WTC11 (cell line): ENCODE measurements at regions of chr22 and their contacts with region 1.

Region 1: DNA sequence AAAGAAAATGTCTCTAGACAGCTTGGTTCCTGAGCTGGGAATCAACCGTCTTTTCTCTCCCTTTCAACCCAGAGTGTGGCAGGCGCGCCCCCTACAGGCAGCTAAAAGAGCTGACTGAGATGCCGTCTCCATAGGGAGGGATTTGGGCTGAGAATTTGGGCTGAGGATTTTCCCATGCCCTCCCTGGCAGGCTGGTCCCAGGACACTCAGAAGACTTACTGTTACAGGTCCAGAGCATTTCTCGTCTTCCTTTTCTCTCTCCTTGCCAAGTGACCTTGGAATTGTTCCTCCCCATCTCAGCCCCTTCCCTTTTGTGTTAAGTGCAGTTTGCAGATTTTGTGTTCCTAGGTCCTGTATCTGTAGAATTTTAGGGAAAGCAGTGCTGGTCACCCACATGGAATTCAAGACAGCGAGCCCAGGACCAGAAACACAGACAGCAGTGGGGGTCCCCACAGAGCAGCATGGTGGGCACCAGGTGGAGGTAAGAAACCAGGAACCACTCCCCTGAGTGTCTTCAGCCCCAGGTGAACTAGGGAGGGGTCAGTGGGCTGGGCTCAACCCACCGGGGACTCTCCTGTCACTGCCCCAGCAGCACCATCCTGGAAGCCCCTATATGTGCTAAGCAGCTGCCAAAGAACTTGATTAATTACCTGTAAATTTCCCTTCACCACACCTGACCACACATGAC is 9.9 kb upstream of the IGLL5 start:
- DNase-seq: peak; percentile 85
- ATAC-seq: peak; percentile 83
- H3K4me3 Mint-ChIP-seq: no peak overlapping the region
- H3K27ac Mint-ChIP-seq: no peak overlapping the region
- H3K4me1 Mint-ChIP-seq: no peaks in the 10 kb centered on the region
- H3K27me3 Mint-ChIP-seq: peaks cover 79% of the 10 kb centered on the region
- CTCF ChIP-seq: peak; percentile 78

Region 2: GRCh38 chr22:22802339-22802970 is 75.2 kb before region 1 on chr22:
- CTCF ChIA-PET with region 1: interaction called, 17 read pairs
- POLR2A ChIA-PET with region 1: no interaction called
- DNase-seq: no peak
- ATAC-seq: peak; percentile 62
- H3K4me3 Mint-ChIP-seq: no peak overlapping the region
- H3K27ac Mint-ChIP-seq: no peak overlapping the region
- H3K4me1 Mint-ChIP-seq: peaks cover 5% of the 10 kb centered on the region; the same call in 1 of the 2 replicates
- H3K27me3 Mint-ChIP-seq: peaks cover 94% of the 10 kb centered on the region
- CTCF ChIP-seq: no peak

Region 3: GRCh38 chr22:22810018-22810427 is 67.6 kb before region 1 on chr22:
- CTCF ChIA-PET with region 1: interaction called, 13 read pairs
- POLR2A ChIA-PET with region 1: no interaction called
- DNase-seq: peak; percentile 68
- ATAC-seq: peak; percentile 91
- H3K4me3 Mint-ChIP-seq: no peak overlapping the region
- H3K27ac Mint-ChIP-seq: no peak overlapping the region
- H3K4me1 Mint-ChIP-seq: no peaks in the 10 kb centered on the region
- H3K27me3 Mint-ChIP-seq: peaks cover 84% of the 10 kb centered on the region
- CTCF ChIP-seq: peak; percentile 66; the same call in 1 of the 2 replicates

Region 4: GRCh38 chr22:22976033-22976922 is 98.6 kb after region 1 on chr22:
- CTCF ChIA-PET with region 1: no interaction called
- POLR2A ChIA-PET with region 1: no interaction called
- DNase-seq: no peak
- ATAC-seq: no peak
- H3K4me3 Mint-ChIP-seq: no peak overlapping the region
- H3K27ac Mint-ChIP-seq: no peak overlapping the region
- H3K4me1 Mint-ChIP-seq: no peaks in the 10 kb centered on the region
- H3K27me3 Mint-ChIP-seq: peaks cover 75% of the 10 kb centered on the region
- CTCF ChIP-seq: no peak